A549 (cell line): ENCODE measurements at regions of chr2 and their contacts with region 1.

Region 1: DNA sequence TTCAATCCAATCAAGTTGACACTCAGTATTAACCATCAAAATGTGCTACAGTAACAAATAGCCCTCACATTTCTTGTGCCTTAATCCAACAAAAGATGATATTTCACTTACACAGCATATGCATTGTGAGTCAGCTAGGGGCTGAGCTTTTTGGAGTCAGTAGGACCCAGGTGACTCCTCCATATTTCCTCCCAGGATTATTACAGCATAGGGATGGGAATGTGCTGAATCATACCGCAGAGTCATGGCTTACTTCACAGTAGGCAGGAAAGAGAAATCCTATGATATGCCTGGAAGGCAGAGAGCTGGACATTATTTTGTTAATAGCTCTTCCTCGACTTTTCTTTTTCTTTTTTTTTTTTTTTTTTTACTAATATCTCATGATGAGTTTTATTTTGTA is 153.3 kb downstream of the TMEM182 start:
- DNase-seq: peak; percentile 25 to 59
- ATAC-seq: peak; percentile 71 to 82
- H3K4me3 ChIP-seq: no peak overlapping the region
- H3K27ac ChIP-seq: 0 out of 6 replicates have a peak overlapping the region, but pooled peaks of 1 of the 2 experiments have one; percentile 41
- H3K4me1 ChIP-seq: no peaks in the 10 kb centered on the region
- CTCF ChIP-seq: no peak
- EP300 ChIP-seq: no peak
- POLR2A ChIP-seq: no peak
- RAD21 ChIP-seq: no peak

Region 2: GRCh38 chr2:102258386-102259074 is 656.6 kb before region 1 on chr2:
- CTCF ChIA-PET with region 1: no interaction called
- POLR2A ChIA-PET with region 1: interaction called, 14 read pairs
- DNase-seq: peak; percentile 21 to 40
- ATAC-seq: peak; percentile 74 to 92; a peak in 5 of 6 replicates
- H3K4me3 ChIP-seq: no peak overlapping the region
- H3K27ac ChIP-seq: peak overlapping the region; percentile 52 to 54; a peak in 5 of 6 replicates
- H3K4me1 ChIP-seq: peaks cover 3% of the 10 kb centered on the region; the same call in 1 of the 3 replicates
- CTCF ChIP-seq: no peak
- EP300 ChIP-seq: no peak
- POLR2A ChIP-seq: no peak
- RAD21 ChIP-seq: no peak